Esophagus muscularis mucosa (tissue), 4 donors: ENCODE measurements at regions of chr16 and their contacts with region 1.

Region 1: GRCh38 chr16:30445408-30446202 is at the start of gene SEPHS2:
- DNase-seq: peak; percentile 99
- H3K4me3 ChIP-seq: peak within 1 kb of the TSS; percentile 77 to 95 (median 82)
- H3K27ac ChIP-seq: peak within 1 kb of the TSS; percentile 93 to 99 (median 98)
- H3K4me1 ChIP-seq: peaks cover 17 to 27% (median 24%) of the 10 kb centered on the region in 4 donors
- H3K27me3 ChIP-seq: no peaks in the 10 kb centered on the region
- CTCF ChIP-seq: peak; percentile 49 to 58 (median 50)
- EP300 ChIP-seq: no peak
- POLR2A ChIP-seq: peak; percentile 76
- total RNA-seq, gene SEPHS2: 26.5 to 37.6 (median 33.8) TPM

Region 2: DNA sequence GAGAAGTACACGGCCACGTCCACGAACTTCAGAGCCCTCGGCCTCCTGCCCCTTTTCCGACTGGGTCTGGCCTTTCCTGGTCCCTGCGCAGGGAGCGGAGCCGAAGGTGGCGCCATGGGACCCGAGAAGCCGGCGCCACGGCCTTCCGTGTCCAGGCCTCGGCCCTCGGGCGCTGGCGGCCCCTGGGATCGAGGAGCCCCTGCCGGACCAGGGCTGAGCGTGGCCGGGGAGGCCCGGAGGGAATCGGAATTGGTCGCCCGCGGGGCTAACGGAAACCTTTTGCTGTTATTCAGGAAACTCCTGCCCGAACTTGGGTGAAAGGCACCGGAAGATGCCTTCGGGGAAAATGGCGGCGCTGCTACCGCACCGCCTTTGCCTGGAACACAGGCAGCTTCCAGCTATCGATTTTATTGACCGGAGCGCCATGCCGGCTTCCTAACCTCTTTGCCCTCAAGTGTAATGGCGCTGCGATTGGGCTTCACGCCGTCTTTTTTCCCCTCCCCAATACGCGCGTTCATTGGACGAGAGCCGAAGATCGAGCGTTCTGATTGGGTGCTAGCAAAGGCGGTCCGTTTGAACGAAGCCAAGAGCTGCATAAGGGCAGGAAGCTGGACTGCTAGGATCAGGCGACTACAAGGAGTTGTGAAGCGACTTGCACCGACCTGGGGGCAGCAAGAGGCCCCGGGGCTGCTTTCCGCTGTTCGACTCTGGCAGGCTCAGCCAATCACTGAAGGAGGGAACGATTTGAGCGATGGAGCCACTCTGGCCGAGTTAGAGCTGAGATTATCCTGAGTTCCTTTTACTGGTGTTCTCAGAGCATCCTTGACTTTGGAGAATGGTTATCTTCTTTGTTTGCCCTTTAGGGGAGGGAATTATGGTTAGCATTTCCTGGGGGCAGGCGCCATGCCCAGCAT is 164.6 kb after region 1 on chr16 and contains the start of gene ZNF689:
- intact Hi-C with region 1: loop called (anchors 10 kb)
- DNase-seq: peak; percentile 100
- H3K4me3 ChIP-seq: peak within 1 kb of the TSS; percentile 71 to 91 (median 83)
- H3K27ac ChIP-seq: peak within 1 kb of the TSS; percentile 87 to 99 (median 94)
- H3K4me1 ChIP-seq: peaks cover 13 to 33% (median 26%) of the 10 kb centered on the region in 4 donors
- H3K27me3 ChIP-seq: peaks cover 0 to 4% (median 0%) of the 10 kb centered on the region in 4 donors
- CTCF ChIP-seq: peak in 1 of 3 experiments; percentile 7
- EP300 ChIP-seq: no peak
- POLR2A ChIP-seq: no peak
- total RNA-seq, gene ZNF689: 9.1 to 14.5 (median 13.9) TPM

Region 3: DNA sequence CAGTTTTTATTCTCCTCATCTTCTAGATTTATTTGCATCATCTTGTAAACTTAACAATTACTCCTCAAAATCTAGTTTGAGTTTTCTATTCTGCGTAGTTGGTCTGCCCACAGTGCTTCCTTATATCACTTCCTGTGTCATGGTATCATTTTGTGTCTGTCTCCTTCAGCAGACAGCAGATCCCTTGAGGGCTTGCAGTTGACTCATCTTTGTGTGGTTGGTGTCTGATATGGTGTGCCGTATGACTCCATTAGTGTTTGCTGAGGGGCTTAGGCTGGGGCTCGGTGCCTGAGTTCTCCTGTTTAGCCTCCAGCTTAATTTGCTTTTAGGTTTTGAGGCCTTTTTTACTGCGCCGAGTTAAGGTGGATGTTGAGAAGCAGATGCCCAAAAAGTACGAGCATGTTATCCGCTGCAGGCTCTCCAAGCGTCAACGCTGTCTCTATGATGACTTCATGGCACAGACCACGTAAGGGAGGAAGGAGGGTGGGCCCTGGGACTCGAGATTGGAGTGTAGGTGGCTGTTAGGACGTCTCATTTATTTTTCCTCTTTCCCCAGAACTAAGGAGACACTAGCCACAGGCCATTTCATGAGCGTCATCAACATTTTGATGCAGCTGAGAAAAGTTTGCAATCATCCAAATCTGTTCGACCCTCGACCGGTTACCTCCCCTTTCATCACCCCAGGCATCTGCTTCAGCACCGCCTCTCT is 270.3 kb after region 1 on chr16:
- intact Hi-C with region 1: no loop called
- DNase-seq: no peak
- H3K4me3 ChIP-seq: no peak overlapping the region
- H3K27ac ChIP-seq: peak overlapping the region in 1 of 4 donors; percentile 13
- H3K4me1 ChIP-seq: peaks cover 0 to 3% (median 0%) of the 10 kb centered on the region in 4 donors
- H3K27me3 ChIP-seq: no peaks in the 10 kb centered on the region
- CTCF ChIP-seq: no peak
- EP300 ChIP-seq: no peak
- POLR2A ChIP-seq: no peak